ENCODE measurements at regions of chr7 and their contacts with region 1.

Region 1: DNA sequence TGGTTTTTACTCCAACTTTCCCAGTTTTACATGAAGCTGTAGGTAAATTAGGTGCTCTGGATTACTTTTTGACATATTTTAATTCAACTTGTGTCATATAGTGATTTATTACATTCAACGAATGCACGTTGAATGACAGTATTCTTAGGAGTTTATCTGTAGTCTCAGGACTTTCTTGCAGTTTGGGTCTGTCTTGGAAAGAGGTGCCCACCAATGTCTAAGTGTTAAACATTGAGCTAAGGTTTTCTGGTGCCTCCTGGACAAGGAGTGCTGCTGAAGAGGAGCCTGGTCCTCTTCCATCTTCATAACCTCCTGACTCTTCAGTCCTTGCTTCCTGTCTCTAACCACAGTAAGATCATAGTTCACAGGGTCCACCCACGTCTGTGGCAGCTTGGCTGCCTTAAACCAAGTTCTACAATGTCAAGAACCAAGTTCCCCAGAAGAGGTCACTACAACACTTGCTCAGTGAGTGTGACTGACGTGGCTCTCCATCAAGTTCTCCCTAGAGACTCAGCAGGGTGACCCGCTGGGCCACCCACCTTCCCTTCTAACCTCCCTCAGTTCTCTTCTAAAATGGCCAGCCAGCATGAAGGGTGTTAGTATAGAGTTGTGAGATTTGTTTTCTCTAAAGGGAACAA is 6.1 kb downstream of the NPY start:
- DNase-seq: peak in 1 of 10 donors; percentile 13
- H3K4me3 ChIP-seq: no peak overlapping the region
- H3K27ac ChIP-seq: no peak overlapping the region
- H3K27me3 ChIP-seq: peaks cover 0 to 58% (median 17%) of the 10 kb centered on the region in 45 donors
- CTCF ChIP-seq: peak in 51 of 56 donors; percentile 7 to 70 (median 41)

Region 2: GRCh38 chr7:24102988-24103387 is 187.1 kb before region 1 on chr7:
- intact Hi-C with region 1: no loop called
- DNase-seq: no peak
- H3K4me3 ChIP-seq: no peak overlapping the region
- H3K27ac ChIP-seq: no peak overlapping the region
- H3K27me3 ChIP-seq: no peaks in the 10 kb centered on the region
- CTCF ChIP-seq: no peak

Region 3: DNA sequence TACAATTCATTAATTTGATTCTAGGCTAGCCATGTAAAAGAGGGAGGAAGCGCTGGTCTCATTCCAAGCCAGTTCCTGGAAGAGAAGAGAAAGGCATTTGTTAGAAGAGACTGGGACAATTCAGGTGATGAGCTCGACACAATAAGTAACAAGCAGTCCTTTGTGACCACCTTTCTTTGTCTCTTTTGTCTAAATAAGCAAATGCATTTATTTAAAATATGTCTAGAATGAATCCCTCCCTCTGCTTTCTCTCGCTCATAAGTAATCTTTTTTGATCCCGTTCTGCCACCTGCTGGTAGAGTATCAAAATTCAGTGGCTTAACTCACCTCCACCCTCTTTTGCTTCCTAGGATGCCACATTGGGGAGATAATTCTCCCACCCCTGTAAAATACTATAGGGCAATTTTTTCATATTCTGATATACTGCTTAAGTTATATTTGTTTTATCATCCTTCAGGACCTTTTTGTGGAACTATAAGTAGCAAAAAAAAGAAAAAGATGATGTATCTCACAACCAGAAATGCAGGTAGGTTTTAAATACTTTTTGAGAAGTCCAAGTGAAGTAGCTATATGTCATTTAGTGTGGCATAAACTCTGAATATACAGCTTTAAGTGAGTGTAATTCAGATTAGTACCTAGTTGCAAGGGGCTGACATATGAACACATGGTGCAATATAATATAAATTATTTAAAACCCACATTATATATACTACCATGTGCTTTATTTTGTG is 375.6 kb after region 1 on chr7:
- intact Hi-C with region 1: loop called in 1 of 2 experiments (anchors 5 kb)
- DNase-seq: peak in 1 of 10 donors; percentile 5
- H3K4me3 ChIP-seq: no peak overlapping the region
- H3K27ac ChIP-seq: no peak overlapping the region
- H3K27me3 ChIP-seq: peaks cover 0 to 3% (median 0%) of the 10 kb centered on the region in 45 donors
- CTCF ChIP-seq: peak; percentile 62 to 96 (median 81)

Measured in dorsolateral prefrontal cortex (tissue), 120 donors.